ENCODE measurements at regions of chr4 and their contacts with region 1.

Region 1: GRCh38 chr4:7761720-7762119 is 177.9 kb downstream of the AFAP1 start:
- DNase-seq: peak; percentile 96
- H3K4me3 ChIP-seq: no peak overlapping the region
- H3K27ac ChIP-seq: peak overlapping the region; percentile 64 to 78 (median 70)
- H3K4me1 ChIP-seq: peaks cover 0 to 26% (median 23%) of the 10 kb centered on the region in 4 donors
- H3K27me3 ChIP-seq: no peaks in the 10 kb centered on the region
- CTCF ChIP-seq: peak; percentile 75 to 96 (median 82)
- EP300 ChIP-seq: no peak
- POLR2A ChIP-seq: no peak

Region 2: DNA sequence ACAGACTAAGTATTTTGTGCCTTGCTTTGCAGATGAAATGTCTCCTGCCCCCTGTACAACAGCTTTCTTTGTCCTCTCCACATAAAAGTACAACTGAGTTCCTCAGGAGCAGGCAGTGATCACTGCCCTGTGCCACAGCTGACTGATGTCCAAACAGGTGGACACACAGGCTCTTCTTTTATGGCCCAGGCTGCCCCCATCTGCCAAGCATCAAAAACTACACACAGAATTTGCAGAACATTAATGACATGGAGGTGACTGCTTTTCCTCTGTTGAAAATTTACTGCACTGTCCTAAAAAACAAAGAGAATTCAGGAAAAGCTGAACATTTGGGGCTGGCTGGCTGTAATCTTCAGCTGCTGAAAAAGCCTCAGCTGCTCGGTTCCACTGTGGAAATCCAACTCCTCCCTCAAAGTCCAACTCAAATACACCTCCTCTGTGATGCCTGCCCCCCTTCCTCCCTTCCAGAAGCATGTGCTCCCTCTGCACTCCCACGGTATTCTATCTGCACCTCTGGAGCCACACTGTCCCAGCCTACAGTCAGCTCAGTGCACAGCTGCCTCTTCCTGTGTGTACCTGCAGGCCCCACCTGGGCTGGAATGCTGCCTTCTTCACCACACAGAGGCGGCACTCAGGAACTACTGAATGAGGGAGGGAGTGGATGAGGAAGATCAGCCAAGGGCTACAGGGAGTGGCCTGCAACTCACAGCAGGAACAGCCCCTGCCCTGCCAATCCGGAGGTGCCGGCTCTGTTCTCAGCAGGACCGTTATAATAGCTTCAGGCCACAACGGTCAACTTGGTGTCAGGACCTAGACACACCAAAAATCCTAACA is 167.6 kb after region 1 on chr4:
- intact Hi-C with region 1: loop called (anchors 5 kb)
- DNase-seq: peak; percentile 69
- H3K4me3 ChIP-seq: no peak overlapping the region
- H3K27ac ChIP-seq: peak overlapping the region; percentile 39 to 58 (median 50)
- H3K4me1 ChIP-seq: peaks cover 0 to 57% (median 42%) of the 10 kb centered on the region in 4 donors
- H3K27me3 ChIP-seq: no peaks in the 10 kb centered on the region
- CTCF ChIP-seq: peak in 1 of 4 experiments; percentile 37
- EP300 ChIP-seq: no peak
- POLR2A ChIP-seq: no peak

Region 3: DNA sequence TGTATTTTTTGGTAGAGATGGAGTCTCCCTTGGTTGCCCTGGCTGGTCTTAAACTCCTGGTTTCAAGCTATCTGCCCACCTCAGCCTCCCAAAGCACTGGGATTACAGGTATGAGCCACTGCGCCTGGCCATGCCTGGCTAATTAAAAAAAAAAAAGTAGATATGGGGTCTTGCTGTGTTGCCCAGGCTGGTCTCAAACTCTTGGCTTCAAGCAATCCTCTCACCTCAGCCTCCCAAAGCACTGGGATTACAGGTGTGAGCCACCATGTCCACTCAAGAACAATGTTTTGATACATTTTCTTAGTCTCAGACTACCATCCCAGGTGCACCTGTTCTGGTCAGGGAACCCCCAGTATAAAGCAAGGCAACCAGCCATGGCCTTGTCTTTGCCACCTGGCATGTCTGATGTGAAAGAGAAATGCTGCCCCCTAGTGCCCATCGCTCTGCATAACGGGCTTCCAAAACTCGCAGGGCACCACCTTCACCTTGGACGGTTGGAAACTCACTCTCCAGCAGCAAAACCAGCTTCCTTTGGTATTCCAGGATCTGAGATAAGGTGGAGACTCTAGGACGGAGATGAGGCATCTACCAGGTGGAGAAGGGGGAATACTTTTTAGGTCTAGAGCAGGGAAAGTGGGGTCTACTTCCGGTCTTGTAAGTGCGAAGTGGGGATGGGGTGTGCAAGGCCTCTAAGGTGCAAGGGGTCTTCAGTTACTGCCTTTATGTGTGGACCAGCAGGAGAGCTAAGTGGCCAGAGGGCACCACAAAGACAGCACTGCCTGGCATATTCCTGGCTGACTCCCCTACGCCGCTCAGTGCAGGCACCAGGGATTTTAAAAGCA is 225.6 kb after region 1 on chr4:
- intact Hi-C with region 1: loop called (anchors 2 kb)
- DNase-seq: peak; percentile 82
- H3K4me3 ChIP-seq: no peak overlapping the region
- H3K27ac ChIP-seq: no peak overlapping the region
- H3K4me1 ChIP-seq: peaks cover 0 to 4% (median 0%) of the 10 kb centered on the region in 4 donors
- H3K27me3 ChIP-seq: no peaks in the 10 kb centered on the region
- CTCF ChIP-seq: peak; percentile 66 to 88 (median 86)
- EP300 ChIP-seq: no peak
- POLR2A ChIP-seq: no peak

Measured in sigmoid colon (tissue), 7 donors.